ENCODE measurements at regions of chr16 and their contacts with region 1.

Region 1: DNA sequence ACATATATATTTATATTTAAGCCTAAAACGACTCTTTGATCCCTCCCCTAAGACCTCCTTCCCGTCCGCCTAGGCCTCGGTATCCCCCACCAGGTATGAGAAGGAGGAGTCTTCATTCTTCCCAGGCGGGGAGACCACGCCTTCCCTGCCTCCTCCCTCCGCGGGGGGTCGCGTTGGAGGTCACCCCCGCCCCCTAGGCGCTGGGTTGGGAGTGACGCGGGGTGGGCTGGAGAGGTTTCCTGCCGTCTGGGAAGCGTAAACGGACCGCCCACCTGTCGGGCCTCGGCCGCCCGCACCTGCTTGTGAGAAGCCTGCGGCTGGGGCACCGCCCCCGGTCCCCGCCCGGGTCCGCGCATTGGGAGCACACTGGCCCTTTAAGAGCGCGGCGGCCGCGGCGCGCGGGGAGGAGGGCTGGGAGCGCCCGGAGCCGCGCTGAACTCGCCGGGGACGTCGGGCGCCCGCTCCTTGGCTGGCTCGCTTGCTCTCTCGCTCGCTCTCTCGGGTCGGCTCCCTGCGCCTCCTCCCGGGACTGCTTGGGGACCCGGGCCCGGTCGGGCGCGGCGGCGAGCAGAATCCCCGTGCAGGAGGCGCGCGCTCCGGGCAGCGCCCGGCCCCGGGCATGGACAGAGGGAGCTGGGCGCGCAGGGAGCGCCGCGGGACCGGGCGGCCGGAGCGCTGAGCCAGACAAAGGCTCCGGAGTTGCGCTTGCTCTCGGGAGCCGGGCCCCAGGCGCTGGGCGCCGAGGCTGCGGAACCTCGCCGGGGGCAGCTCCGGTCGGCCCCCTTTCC is at the start of gene MMP15:
- DNase-seq: peak; percentile 94
- ATAC-seq: peak; percentile 70
- H3K4me3 ChIP-seq: peak within 1 kb of the TSS; percentile 78 to 94
- H3K27ac ChIP-seq: peak within 1 kb of the TSS; percentile 93
- H3K4me1 ChIP-seq: peaks cover 29 to 52% of the 10 kb centered on the region in 2 experiments
- H3K27me3 ChIP-seq: no peaks in the 10 kb centered on the region
- CTCF ChIP-seq: no peak
- POLR2A ChIP-seq: peak; percentile 60
- RAD21 ChIP-seq: no peak
- total RNA-seq, gene MMP15: 38.5 TPM

Region 2: GRCh38 chr16:58077853-58078252 is 52.3 kb after region 1 on chr16:
- CTCF ChIA-PET with region 1: no interaction called
- POLR2A ChIA-PET with region 1: no interaction called
- RAD21 ChIA-PET with region 1: no interaction called
- intact Hi-C with region 1: no loop called
- DNase-seq: no peak
- ATAC-seq: no peak
- H3K4me3 ChIP-seq: no peak overlapping the region
- H3K27ac ChIP-seq: no peak overlapping the region
- H3K4me1 ChIP-seq: no peaks in the 10 kb centered on the region
- H3K27me3 ChIP-seq: no peaks in the 10 kb centered on the region
- CTCF ChIP-seq: no peak
- POLR2A ChIP-seq: no peak
- RAD21 ChIP-seq: no peak

Region 3: GRCh38 chr16:58129097-58129936 is 103.8 kb after region 1 on chr16 and contains the start of gene CFAP20:
- CTCF ChIA-PET with region 1: interaction called, 5 read pairs
- POLR2A ChIA-PET with region 1: interaction called, 13 read pairs
- RAD21 ChIA-PET with region 1: interaction called, 3 read pairs
- intact Hi-C with region 1: loop called (anchors 1 kb)
- DNase-seq: peak; percentile 100
- ATAC-seq: peak; percentile 94
- H3K4me3 ChIP-seq: peak within 1 kb of the TSS; percentile 94 to 99
- H3K27ac ChIP-seq: peak within 1 kb of the TSS; percentile 80
- H3K4me1 ChIP-seq: peaks cover 11 to 28% of the 10 kb centered on the region in 2 experiments; a peak in 3 of 4 replicates
- H3K27me3 ChIP-seq: no peaks in the 10 kb centered on the region
- CTCF ChIP-seq: no peak
- POLR2A ChIP-seq: peak; percentile 87
- RAD21 ChIP-seq: no peak
- total RNA-seq, gene CFAP20: 59.7 TPM

Region 4: GRCh38 chr16:58249780-58250478 is 224.4 kb after region 1 on chr16:
- CTCF ChIA-PET with region 1: no interaction called
- POLR2A ChIA-PET with region 1: no interaction called
- RAD21 ChIA-PET with region 1: no interaction called
- intact Hi-C with region 1: no loop called
- DNase-seq: peak; percentile 63
- ATAC-seq: peak; percentile 94
- H3K4me3 ChIP-seq: peak overlapping the region; percentile 96 to 97
- H3K27ac ChIP-seq: peak overlapping the region; percentile 55
- H3K4me1 ChIP-seq: peaks cover 8 to 11% of the 10 kb centered on the region in 2 experiments; a peak in 3 of 4 replicates
- H3K27me3 ChIP-seq: no peaks in the 10 kb centered on the region
- CTCF ChIP-seq: no peak
- POLR2A ChIP-seq: peak; percentile 24
- RAD21 ChIP-seq: no peak

Region 5: GRCh38 chr16:58306327-58306726 is 280.8 kb after region 1 on chr16:
- CTCF ChIA-PET with region 1: no interaction called
- POLR2A ChIA-PET with region 1: no interaction called
- RAD21 ChIA-PET with region 1: no interaction called
- intact Hi-C with region 1: loop called (anchors 10 kb)
- DNase-seq: peak; percentile 26
- ATAC-seq: peak; percentile 66
- H3K4me3 ChIP-seq: no peak overlapping the region
- H3K27ac ChIP-seq: no peak overlapping the region
- H3K4me1 ChIP-seq: no peaks in the 10 kb centered on the region
- H3K27me3 ChIP-seq: no peaks in the 10 kb centered on the region
- CTCF ChIP-seq: peak; percentile 33 to 66 (median 62); a peak in 5 of 6 replicates
- POLR2A ChIP-seq: no peak
- RAD21 ChIP-seq: peak; percentile 55

Region 6: GRCh38 chr16:58487566-58488351 is 462.2 kb after region 1 on chr16:
- CTCF ChIA-PET with region 1: no interaction called
- POLR2A ChIA-PET with region 1: no interaction called
- RAD21 ChIA-PET with region 1: no interaction called
- intact Hi-C with region 1: loop called (anchors 5 kb)
- DNase-seq: peak; percentile 56
- ATAC-seq: peak; percentile 95
- H3K4me3 ChIP-seq: no peak overlapping the region
- H3K27ac ChIP-seq: no peak overlapping the region
- H3K4me1 ChIP-seq: peaks cover 0 to 4% of the 10 kb centered on the region in 2 experiments; a peak in 3 of 4 replicates
- H3K27me3 ChIP-seq: no peaks in the 10 kb centered on the region
- CTCF ChIP-seq: peak; percentile 86 to 97 (median 91)
- POLR2A ChIP-seq: no peak
- RAD21 ChIP-seq: peak; percentile 95

Measured in HCT116 (cell line).